Dorsolateral prefrontal cortex (tissue), 120 donors: ENCODE measurements at regions of chr5 and their contacts with region 1.

Region 1: GRCh38 chr5:4230786-4231641 is 635.4 kb downstream of the IRX1 start:
- DNase-seq: peak in 9 of 10 donors; percentile 9 to 68 (median 58)
- H3K4me3 ChIP-seq: peak overlapping the region in 57 of 59 donors; percentile 2 to 59 (median 35)
- H3K27ac ChIP-seq: peak overlapping the region in 3 of 59 donors; percentile 10 to 27 (median 16)
- H3K27me3 ChIP-seq: peaks cover 0 to 6% (median 0%) of the 10 kb centered on the region in 45 donors
- CTCF ChIP-seq: peak in 2 of 56 donors; percentile 7 to 11

Region 2: DNA sequence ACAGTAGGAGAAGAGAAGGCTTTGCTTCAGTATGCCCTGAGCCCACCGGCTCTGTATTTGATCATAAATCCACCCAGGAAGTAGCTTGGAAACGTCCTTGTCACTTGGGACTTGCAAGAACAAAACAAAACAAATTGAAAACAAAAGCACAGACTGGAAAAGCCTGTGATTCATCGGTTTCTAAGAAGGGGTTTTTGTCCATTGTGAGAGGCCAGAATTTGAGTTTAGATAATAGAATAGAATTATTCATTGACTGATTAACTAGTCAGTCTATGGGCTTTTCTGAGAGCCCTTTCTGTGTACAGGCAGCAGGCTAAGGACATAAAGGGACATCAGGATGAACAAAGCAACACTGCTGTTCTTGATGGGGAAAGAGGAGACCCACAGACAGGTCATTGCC is 210.6 kb before region 1 on chr5:
- intact Hi-C with region 1: loop called in 1 of 2 experiments (anchors 2 kb)
- DNase-seq: no peak
- H3K4me3 ChIP-seq: peak overlapping the region in 1 of 59 donors; percentile 18
- H3K27ac ChIP-seq: peak overlapping the region in 1 of 59 donors; percentile 26
- H3K27me3 ChIP-seq: peaks cover 0 to 43% (median 0%) of the 10 kb centered on the region in 45 donors
- CTCF ChIP-seq: no peak